ENCODE measurements at regions of chr22 and their contacts with region 1.

Region 1: DNA sequence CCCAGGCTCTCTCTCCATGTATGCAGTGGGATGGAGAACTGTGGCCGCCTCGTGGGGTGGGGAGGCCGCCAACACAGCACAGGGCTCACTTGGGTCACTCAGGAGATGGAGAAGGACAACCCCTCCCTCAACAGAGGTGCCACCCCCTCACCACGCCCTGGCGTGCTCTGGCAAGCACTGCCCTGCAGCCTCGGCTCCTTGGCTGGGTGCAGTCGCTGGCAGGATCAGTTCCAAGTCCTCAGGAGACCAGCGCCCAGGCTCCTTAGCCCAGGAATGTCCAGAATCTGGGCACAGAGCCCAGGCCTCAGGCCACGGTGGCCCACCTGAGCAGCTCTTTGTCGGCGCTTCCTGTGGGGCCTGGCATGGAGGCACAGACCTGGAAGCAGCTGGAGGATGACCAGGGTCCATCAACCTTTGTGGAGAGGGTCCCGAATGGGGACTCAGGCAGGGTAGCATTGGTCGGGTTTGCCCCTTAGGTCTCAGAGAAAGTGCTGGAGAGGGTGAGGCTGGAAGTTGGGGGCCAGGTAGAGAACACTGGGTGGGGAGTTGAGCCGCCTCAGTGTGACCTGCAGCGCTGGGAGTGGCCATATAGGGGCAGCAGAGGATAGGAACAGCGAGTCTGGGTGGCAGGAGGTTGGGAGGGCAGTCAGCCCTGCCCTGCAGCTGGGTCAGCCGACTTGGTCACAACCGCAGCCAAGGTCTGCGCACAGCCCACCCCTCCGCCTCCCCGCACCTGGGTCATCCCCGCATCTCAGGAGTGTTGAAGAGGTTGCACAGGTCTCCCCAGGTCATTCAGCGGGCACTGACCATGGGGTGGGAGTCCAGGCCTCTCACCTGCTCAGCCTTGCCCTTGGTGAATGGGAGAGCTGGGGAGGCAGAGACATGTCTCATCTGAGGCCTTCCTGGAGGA is 8.2 kb downstream of the SUSD2 start:
- H3K4me3 ChIP-seq: no peak overlapping the region
- H3K27ac ChIP-seq: no peak overlapping the region
- H3K4me1 ChIP-seq: no peaks in the 10 kb centered on the region
- CTCF ChIP-seq: peak; percentile 91

Region 2: DNA sequence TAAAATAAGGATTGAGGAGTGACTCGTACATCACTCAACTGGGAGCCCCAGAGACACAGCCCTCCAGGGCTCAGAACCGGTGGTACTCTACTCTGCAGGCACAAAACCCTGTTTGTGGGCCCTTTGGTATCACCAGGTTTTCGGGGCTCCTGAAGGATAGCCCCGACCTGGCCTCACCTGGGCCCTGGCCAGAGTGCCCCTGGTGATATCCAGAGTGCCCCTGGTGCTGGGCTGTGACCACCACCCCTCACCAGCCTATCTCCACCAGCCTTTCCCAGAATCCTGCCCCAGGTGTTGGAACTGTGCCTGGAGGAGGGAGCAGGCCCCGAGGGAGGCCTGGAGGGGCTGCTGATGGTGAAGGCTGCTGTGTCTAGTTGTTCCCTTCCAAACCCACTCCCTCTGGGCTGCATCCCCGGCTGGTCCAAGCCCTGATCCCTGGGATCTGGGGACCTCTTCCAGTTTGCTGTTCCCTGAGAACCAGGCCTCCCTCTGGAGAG is 57.6 kb after region 1 on chr22:
- CTCF ChIA-PET with region 1: interaction called, 17 read pairs
- POLR2A ChIA-PET with region 1: no interaction called
- H3K4me3 ChIP-seq: no peak overlapping the region
- H3K27ac ChIP-seq: no peak overlapping the region
- H3K4me1 ChIP-seq: peaks cover 4% of the 10 kb centered on the region
- CTCF ChIP-seq: no peak

Measured in HEK293 (cell line).